Stomach (tissue), 19 donors: ENCODE measurements at regions of chr2 and their contacts with region 1.

Region 1: GRCh38 chr2:238771218-238771617 is 76.7 kb upstream of the TWIST2 start:
- DNase-seq: no peak
- H3K4me3 ChIP-seq: no peak overlapping the region
- H3K27ac ChIP-seq: no peak overlapping the region
- H3K4me1 ChIP-seq: peaks cover 0 to 10% (median 3%) of the 10 kb centered on the region in 4 donors
- H3K27me3 ChIP-seq: peaks cover 0 to 35% (median 5%) of the 10 kb centered on the region in 3 donors
- CTCF ChIP-seq: no peak
- EP300 ChIP-seq: no peak
- POLR2A ChIP-seq: no peak

Region 2: GRCh38 chr2:238528953-238529781 is 242.1 kb before region 1 on chr2:
- intact Hi-C with region 1: loop called (anchors 5 kb)
- DNase-seq: peak in 1 of 2 donors; percentile 78
- H3K4me3 ChIP-seq: no peak overlapping the region
- H3K27ac ChIP-seq: no peak overlapping the region
- H3K4me1 ChIP-seq: peaks cover 8 to 12% (median 10%) of the 10 kb centered on the region in 4 donors
- H3K27me3 ChIP-seq: peaks cover 0 to 1% (median 0%) of the 10 kb centered on the region in 3 donors
- CTCF ChIP-seq: no peak
- EP300 ChIP-seq: no peak
- POLR2A ChIP-seq: no peak